ENCODE measurements at regions of chr12 and their contacts with region 1.

Region 1: DNA sequence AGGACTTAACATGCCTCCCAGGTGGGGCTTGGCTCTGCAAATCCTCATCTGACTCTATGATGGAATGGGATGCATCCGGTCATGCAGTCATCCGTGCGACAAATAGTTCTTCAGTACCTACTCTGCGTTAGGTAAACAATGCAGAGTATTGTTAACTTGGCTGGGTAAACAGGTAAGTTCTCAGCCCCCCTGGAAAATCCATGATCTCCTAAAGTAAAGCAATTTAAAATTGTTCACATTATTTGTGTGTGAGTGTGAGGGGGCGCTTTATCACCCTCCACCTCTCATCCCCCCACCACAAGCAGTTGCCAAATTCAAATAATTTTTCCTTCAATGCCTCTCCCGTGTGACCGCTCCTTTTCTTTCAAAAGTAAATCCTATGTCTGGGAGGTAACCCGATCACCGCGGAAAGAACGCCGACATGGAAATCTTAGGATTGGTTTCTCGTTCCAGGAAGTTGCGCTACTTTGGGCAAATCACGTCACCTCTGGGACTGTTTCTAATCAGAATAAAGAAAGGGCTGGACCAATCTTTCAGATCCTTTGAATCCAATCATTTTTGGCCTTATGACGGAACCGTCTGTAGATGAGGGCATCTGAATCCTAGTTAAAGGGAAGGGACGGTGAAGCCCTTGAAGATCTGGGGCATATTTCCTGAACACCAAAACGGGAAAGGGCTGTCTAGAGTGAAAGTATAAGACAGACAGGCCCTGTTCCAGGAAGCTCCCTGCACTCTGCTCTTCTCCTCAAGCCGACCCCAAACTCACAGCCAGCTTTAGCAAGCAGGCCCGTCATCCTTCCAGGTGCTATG is 44.0 kb upstream of the SINHCAF start:
- DNase-seq: peak; percentile 51
- ATAC-seq: peak; percentile 55
- H3K4me3 ChIP-seq: no peak overlapping the region
- H3K27ac ChIP-seq: no peak overlapping the region
- H3K4me1 ChIP-seq: peaks cover 15% of the 10 kb centered on the region
- H3K27me3 ChIP-seq: no peaks in the 10 kb centered on the region
- CTCF ChIP-seq: no peak
- POLR2A ChIP-seq: no peak
- RAD21 ChIP-seq: no peak

Region 2: DNA sequence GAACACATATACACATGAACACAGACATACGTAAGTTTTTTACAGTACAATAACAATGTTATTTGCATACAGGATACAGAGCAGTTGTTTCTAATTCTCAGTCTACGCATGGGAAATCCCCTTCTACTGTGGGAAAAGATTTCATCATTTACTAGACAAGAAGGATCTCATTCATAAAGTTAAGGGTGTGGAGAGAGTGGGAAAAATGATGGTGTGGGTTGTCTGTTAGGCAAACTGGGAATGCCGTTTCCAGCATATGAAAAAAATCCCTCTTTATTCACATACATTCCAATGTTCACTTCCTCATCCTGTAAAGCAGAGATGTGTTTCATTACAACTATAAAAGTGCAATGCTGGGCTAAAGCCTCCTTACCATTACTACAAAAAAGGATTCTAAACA is 164.9 kb before region 1 on chr12:
- CTCF ChIA-PET with region 1: no interaction called
- POLR2A ChIA-PET with region 1: no interaction called
- dilution Hi-C with region 1: no loop called
- in situ Hi-C with region 1: no loop called
- intact Hi-C with region 1: no loop called
- DNase-seq: peak; percentile 49
- ATAC-seq: no peak
- H3K4me3 ChIP-seq: no peak overlapping the region
- H3K27ac ChIP-seq: no peak overlapping the region
- H3K4me1 ChIP-seq: no peaks in the 10 kb centered on the region
- H3K27me3 ChIP-seq: peaks cover 2% of the 10 kb centered on the region
- CTCF ChIP-seq: no peak
- POLR2A ChIP-seq: no peak
- RAD21 ChIP-seq: no peak

Region 3: DNA sequence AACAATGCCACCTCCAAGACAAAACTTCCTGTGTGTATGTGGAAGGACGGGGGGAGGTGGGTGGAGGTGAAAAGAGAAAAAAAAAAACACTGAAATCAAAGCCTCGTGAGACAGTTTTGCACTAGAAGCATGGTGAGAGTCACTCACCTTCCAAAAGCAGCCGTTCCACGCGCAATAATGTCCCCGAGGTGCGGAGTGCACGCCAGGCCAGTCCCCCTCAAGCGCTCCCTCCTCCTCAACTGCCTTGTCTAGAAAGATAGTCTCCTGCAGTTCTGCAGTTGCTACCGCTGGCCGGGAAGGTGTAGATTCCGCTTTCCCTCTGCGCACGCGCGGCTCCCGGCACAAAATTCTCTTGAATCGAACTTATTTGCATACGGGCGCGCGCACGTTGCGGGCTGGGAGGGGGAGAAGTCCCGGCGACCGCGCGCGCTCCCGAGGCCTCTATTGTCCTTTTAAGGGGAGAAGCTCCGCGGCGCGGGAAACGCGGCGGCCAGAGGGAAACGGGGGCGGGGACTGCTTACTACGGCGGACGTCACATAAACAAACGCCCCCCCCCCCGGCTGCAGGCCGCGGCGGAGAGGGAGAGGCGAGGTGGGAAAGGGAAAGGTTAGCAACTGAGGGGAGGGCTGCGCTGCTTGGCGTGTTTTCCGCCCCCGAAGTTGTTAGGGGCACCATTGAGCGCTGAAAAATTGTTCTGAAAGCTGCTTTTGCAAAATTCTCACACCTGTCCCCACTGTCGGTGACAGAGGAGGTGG is 43.9 kb before region 1 on chr12 and contains the start of gene SINHCAF:
- CTCF ChIA-PET with region 1: no interaction called
- POLR2A ChIA-PET with region 1: no interaction called
- dilution Hi-C with region 1: no loop called
- in situ Hi-C with region 1: no loop called
- intact Hi-C with region 1: loop called (anchors 5 kb)
- DNase-seq: peak; percentile 96
- ATAC-seq: peak; percentile 71
- H3K4me3 ChIP-seq: peak within 1 kb of the TSS; percentile 71
- H3K27ac ChIP-seq: peak within 1 kb of the TSS; percentile 79
- H3K4me1 ChIP-seq: no peaks in the 10 kb centered on the region; the same call in 1 of the 2 replicates
- H3K27me3 ChIP-seq: no peaks in the 10 kb centered on the region
- CTCF ChIP-seq: no peak
- POLR2A ChIP-seq: peak; percentile 79; the same call in 1 of the 2 replicates
- RAD21 ChIP-seq: no peak
- total RNA-seq, gene SINHCAF: 30.8 and 43.3 TPM in 2 replicates

Measured in IMR-90 (cell line).